ENCODE measurements at regions of chr13 and their contacts with region 1.

Region 1: GRCh38 chr13:108549934-108550333 is 79.5 kb upstream of the MYO16 start:
- DNase-seq: no peak
- ATAC-seq: no peak
- H3K4me3 ChIP-seq: no peak overlapping the region
- H3K4me3 Mint-ChIP-seq: no peak overlapping the region
- H3K27ac ChIP-seq: no peak overlapping the region
- H3K27ac Mint-ChIP-seq: no peak overlapping the region
- H3K4me1 ChIP-seq: no peaks in the 10 kb centered on the region
- H3K4me1 Mint-ChIP-seq: no peaks in the 10 kb centered on the region
- H3K27me3 ChIP-seq: no peaks in the 10 kb centered on the region
- H3K27me3 Mint-ChIP-seq: peaks cover 0 to 4% of the 10 kb centered on the region in 2 donors

Region 2: DNA sequence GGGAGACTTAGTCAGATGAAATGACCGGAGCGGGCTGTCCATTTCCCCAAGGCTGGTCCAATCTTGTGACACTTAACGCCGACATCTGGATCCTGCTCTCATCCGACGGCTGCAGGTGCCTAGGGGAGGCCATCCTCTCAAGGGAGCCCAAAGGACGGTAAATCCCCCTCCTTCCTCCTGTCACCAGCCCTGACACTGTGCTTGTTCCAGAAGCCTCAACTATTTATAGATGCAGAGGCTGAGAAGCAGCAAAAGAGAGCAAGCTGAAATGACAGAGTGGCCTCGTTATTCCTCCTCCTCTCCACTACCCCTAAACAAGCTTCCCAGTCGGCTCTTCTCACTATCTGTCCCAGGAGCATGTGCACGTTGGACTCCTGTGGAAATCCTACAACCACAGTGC is 868.3 kb before region 1 on chr13:
- CTCF ChIA-PET with region 1: no interaction called
- POLR2A ChIA-PET with region 1: no interaction called
- DNase-seq: no peak
- ATAC-seq: no peak
- H3K4me3 ChIP-seq: no peak overlapping the region
- H3K4me3 Mint-ChIP-seq: no peak overlapping the region
- H3K27ac ChIP-seq: no peak overlapping the region
- H3K27ac Mint-ChIP-seq: no peak overlapping the region
- H3K4me1 ChIP-seq: no peaks in the 10 kb centered on the region
- H3K4me1 Mint-ChIP-seq: no peaks in the 10 kb centered on the region
- H3K27me3 ChIP-seq: peaks cover 0 to 6% of the 10 kb centered on the region in 2 experiments
- H3K27me3 Mint-ChIP-seq: no peaks in the 10 kb centered on the region

Region 3: DNA sequence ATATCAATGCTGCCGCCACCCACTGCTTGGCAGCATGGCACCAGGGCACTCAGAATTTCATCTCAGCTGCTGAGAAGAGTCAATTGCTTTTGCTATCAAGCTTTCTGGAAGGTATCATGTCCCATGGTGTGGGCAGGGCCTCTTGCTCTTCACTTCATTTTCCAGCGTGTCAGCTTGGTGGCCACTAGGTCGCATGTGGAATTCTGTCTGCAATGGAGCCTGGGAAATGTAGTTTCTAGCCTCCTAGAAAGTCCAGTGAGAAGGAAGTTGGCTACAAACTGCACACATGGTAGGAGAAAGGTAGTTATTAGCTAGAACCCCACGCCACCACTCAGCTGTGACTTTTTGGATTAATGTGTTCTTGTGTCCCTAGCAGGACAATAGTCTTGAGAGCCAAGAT is 184.7 kb after region 1 on chr13:
- CTCF ChIA-PET with region 1: interaction called in 1 of 2 experiments, 14 read pairs
- POLR2A ChIA-PET with region 1: no interaction called
- DNase-seq: no peak
- ATAC-seq: no peak
- H3K4me3 ChIP-seq: no peak overlapping the region
- H3K4me3 Mint-ChIP-seq: no peak overlapping the region
- H3K27ac ChIP-seq: no peak overlapping the region
- H3K27ac Mint-ChIP-seq: no peak overlapping the region
- H3K4me1 ChIP-seq: no peaks in the 10 kb centered on the region
- H3K4me1 Mint-ChIP-seq: no peaks in the 10 kb centered on the region
- H3K27me3 ChIP-seq: no peaks in the 10 kb centered on the region
- H3K27me3 Mint-ChIP-seq: peaks cover 0 to 1% of the 10 kb centered on the region in 2 donors